CD8-positive, alpha-beta T cell (primary cell): ENCODE measurements at regions of chr12 and their contacts with region 1.

Region 1: GRCh38 chr12:52884526-52885293 is 20.2 kb downstream of the KRT8 start:
- DNase-seq: peak; percentile 61 to 90 (median 77)
- ATAC-seq: peak; percentile 88
- H3K4me3 ChIP-seq: no peak overlapping the region
- H3K4me3 Mint-ChIP-seq: no peak overlapping the region
- H3K27ac ChIP-seq: no peak overlapping the region
- H3K27ac Mint-ChIP-seq: no peak overlapping the region
- H3K4me1 ChIP-seq: peaks cover 5% of the 10 kb centered on the region
- H3K4me1 Mint-ChIP-seq: peaks cover 6% of the 10 kb centered on the region
- H3K27me3 ChIP-seq: no peaks in the 10 kb centered on the region
- H3K27me3 Mint-ChIP-seq: peaks cover 13% of the 10 kb centered on the region
- CTCF ChIP-seq: peak; percentile 88

Region 2: GRCh38 chr12:52023182-52023975 is 861.3 kb before region 1 on chr12:
- CTCF ChIA-PET with region 1: no interaction called
- POLR2A ChIA-PET with region 1: no interaction called
- intact Hi-C with region 1: no loop called
- DNase-seq: peak; percentile 81 to 94 (median 91)
- ATAC-seq: peak; percentile 63
- H3K4me3 ChIP-seq: peak overlapping the region; percentile 53 to 66
- H3K4me3 Mint-ChIP-seq: peak overlapping the region; percentile 81
- H3K27ac ChIP-seq: peak overlapping the region; percentile 17 to 44
- H3K27ac Mint-ChIP-seq: peak overlapping the region; percentile 75
- H3K4me1 ChIP-seq: peaks cover 39% of the 10 kb centered on the region
- H3K4me1 Mint-ChIP-seq: peaks cover 43% of the 10 kb centered on the region
- H3K27me3 ChIP-seq: no peaks in the 10 kb centered on the region
- H3K27me3 Mint-ChIP-seq: no peaks in the 10 kb centered on the region
- CTCF ChIP-seq: peak; percentile 86

Region 3: DNA sequence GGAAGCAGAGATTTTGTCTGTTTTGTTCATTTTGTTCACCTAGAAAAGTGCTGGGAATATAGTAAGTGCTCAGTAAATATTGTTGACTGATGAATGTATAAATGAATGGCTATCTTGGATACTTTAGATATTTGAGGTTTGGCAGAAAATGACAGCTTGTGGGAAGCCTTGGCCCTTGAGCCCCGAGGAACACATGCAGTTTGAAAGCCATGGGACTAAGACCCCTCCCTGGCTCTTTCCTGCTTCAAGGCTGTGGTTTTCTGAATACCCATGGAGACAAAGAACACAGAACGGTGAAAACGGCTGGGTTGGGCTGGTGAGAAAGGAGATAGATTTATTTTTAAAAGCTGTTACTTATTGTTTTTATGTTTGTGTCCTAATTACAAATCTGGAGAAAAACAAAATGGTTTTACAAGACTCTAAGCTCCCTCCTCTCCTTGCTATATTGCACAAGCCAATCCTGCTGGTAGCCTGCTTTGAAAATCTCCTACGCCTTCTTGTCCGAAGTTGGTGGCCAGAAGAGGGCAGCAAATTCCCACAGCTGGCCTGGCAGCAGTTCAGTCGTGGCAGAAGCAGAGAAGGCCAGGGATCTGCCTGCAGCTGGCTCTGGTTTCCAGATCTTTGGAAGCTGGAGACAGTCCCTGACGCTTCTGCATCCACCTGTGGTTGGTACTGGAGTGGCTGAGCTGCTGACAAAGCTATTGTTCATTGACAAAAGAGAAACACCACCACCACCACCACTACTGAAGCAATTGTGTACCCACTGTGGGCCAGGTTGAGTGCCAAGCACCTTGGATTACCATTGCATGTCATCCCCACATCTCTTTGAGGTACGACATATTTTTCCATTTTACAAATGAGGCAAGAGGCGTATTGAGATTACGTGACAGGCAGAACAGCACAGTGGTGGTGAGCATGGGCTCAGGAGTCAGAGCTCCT is 512.2 kb before region 1 on chr12:
- CTCF ChIA-PET with region 1: interaction called, 78 read pairs
- POLR2A ChIA-PET with region 1: no interaction called
- intact Hi-C with region 1: loop called (anchors 1 kb)
- DNase-seq: peak; percentile 31 to 75 (median 60)
- ATAC-seq: no peak
- H3K4me3 ChIP-seq: no peak overlapping the region
- H3K4me3 Mint-ChIP-seq: no peak overlapping the region
- H3K27ac ChIP-seq: no peak overlapping the region
- H3K27ac Mint-ChIP-seq: no peak overlapping the region
- H3K4me1 ChIP-seq: no peaks in the 10 kb centered on the region
- H3K4me1 Mint-ChIP-seq: no peaks in the 10 kb centered on the region
- H3K27me3 ChIP-seq: peaks cover 0 to 2% of the 10 kb centered on the region in 2 experiments
- H3K27me3 Mint-ChIP-seq: peaks cover 21% of the 10 kb centered on the region
- CTCF ChIP-seq: peak; percentile 34

Region 4: GRCh38 chr12:52870351-52871290 is 14.1 kb before region 1 on chr12:
- CTCF ChIA-PET with region 1: interaction called, 89 read pairs
- POLR2A ChIA-PET with region 1: interaction called, 5 read pairs
- intact Hi-C with region 1: no loop called
- DNase-seq: peak; percentile 71 to 92 (median 81)
- ATAC-seq: peak; percentile 71
- H3K4me3 ChIP-seq: no peak overlapping the region
- H3K4me3 Mint-ChIP-seq: no peak overlapping the region
- H3K27ac ChIP-seq: peak overlapping the region; percentile 28 to 64
- H3K27ac Mint-ChIP-seq: peak overlapping the region; percentile 41
- H3K4me1 ChIP-seq: peaks cover 33% of the 10 kb centered on the region
- H3K4me1 Mint-ChIP-seq: peaks cover 33% of the 10 kb centered on the region
- H3K27me3 ChIP-seq: no peaks in the 10 kb centered on the region
- H3K27me3 Mint-ChIP-seq: no peaks in the 10 kb centered on the region
- CTCF ChIP-seq: peak; percentile 84

Region 5: GRCh38 chr12:52910248-52910883 is 25.7 kb after region 1 on chr12:
- CTCF ChIA-PET with region 1: interaction called, 15 read pairs
- POLR2A ChIA-PET with region 1: no interaction called
- intact Hi-C with region 1: no loop called
- DNase-seq: no peak
- ATAC-seq: no peak
- H3K4me3 ChIP-seq: no peak overlapping the region
- H3K4me3 Mint-ChIP-seq: no peak overlapping the region
- H3K27ac ChIP-seq: no peak overlapping the region
- H3K27ac Mint-ChIP-seq: no peak overlapping the region
- H3K4me1 ChIP-seq: no peaks in the 10 kb centered on the region
- H3K4me1 Mint-ChIP-seq: peaks cover 2% of the 10 kb centered on the region
- H3K27me3 ChIP-seq: no peaks in the 10 kb centered on the region
- H3K27me3 Mint-ChIP-seq: peaks cover 2% of the 10 kb centered on the region
- CTCF ChIP-seq: no peak

Region 6: DNA sequence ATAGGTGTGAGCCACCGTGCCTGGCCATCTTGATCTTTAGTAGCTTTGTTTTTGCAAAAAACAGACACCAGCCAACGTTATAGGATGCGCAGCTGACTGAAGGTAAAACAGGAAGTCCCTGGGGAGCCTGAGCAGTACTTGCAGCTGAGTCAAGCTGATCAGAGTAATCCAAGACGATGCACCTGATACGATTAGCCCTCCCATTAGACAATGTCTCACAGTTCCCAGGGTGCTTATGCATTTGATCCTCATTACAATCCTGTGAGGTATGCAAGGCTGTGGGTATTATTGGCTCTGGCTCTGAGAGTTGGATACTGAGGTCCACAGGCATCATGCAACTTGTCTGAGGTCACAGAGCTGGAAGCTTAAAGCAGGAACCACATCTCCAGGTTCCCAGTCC is 72.3 kb after region 1 on chr12:
- CTCF ChIA-PET with region 1: interaction called, 21 read pairs
- POLR2A ChIA-PET with region 1: no interaction called
- intact Hi-C with region 1: no loop called
- DNase-seq: peak in 1 of 9 experiments; percentile 16
- ATAC-seq: no peak
- H3K4me3 ChIP-seq: no peak overlapping the region
- H3K4me3 Mint-ChIP-seq: no peak overlapping the region
- H3K27ac ChIP-seq: no peak overlapping the region
- H3K27ac Mint-ChIP-seq: no peak overlapping the region
- H3K4me1 ChIP-seq: no peaks in the 10 kb centered on the region
- H3K4me1 Mint-ChIP-seq: peaks cover 6% of the 10 kb centered on the region
- H3K27me3 ChIP-seq: no peaks in the 10 kb centered on the region
- H3K27me3 Mint-ChIP-seq: peaks cover 3% of the 10 kb centered on the region
- CTCF ChIP-seq: no peak

Region 7: GRCh38 chr12:52992699-52993557 is 108.2 kb after region 1 on chr12:
- CTCF ChIA-PET with region 1: interaction called, 524 read pairs
- POLR2A ChIA-PET with region 1: no interaction called
- intact Hi-C with region 1: no loop called
- DNase-seq: no peak
- ATAC-seq: no peak
- H3K4me3 ChIP-seq: no peak overlapping the region
- H3K4me3 Mint-ChIP-seq: no peak overlapping the region
- H3K27ac ChIP-seq: no peak overlapping the region
- H3K27ac Mint-ChIP-seq: no peak overlapping the region
- H3K4me1 ChIP-seq: no peaks in the 10 kb centered on the region
- H3K4me1 Mint-ChIP-seq: no peaks in the 10 kb centered on the region
- H3K27me3 ChIP-seq: no peaks in the 10 kb centered on the region
- H3K27me3 Mint-ChIP-seq: no peaks in the 10 kb centered on the region
- CTCF ChIP-seq: no peak

Region 8: DNA sequence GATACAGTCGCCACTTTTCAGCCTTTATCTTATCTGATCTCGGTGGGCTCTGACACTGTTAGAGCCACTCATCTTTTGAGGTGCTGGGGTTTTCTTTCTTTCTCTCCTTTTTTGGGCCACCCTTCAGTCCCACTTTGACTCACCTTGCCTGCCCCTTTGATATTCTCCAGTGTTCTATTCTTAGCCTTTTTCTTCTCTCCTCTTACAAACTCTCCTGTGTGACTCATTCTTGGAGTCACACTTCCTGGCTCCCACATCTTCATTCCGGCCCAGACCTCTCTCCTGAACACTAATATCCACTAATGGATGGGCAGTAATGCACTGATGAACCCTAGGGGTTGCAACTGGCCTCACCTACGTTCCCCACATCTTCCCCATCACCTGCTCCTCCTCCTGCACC is 1765.7 kb after region 1 on chr12:
- CTCF ChIA-PET with region 1: no interaction called
- POLR2A ChIA-PET with region 1: no interaction called
- intact Hi-C with region 1: no loop called
- DNase-seq: no peak
- ATAC-seq: no peak
- H3K4me3 ChIP-seq: no peak overlapping the region
- H3K4me3 Mint-ChIP-seq: no peak overlapping the region
- H3K27ac ChIP-seq: no peak overlapping the region
- H3K27ac Mint-ChIP-seq: no peak overlapping the region
- H3K4me1 ChIP-seq: no peaks in the 10 kb centered on the region
- H3K4me1 Mint-ChIP-seq: no peaks in the 10 kb centered on the region
- H3K27me3 ChIP-seq: no peaks in the 10 kb centered on the region
- H3K27me3 Mint-ChIP-seq: peaks cover 27% of the 10 kb centered on the region
- CTCF ChIP-seq: no peak